ENCODE measurements at regions of chr9 and their contacts with region 1.

Region 1: DNA sequence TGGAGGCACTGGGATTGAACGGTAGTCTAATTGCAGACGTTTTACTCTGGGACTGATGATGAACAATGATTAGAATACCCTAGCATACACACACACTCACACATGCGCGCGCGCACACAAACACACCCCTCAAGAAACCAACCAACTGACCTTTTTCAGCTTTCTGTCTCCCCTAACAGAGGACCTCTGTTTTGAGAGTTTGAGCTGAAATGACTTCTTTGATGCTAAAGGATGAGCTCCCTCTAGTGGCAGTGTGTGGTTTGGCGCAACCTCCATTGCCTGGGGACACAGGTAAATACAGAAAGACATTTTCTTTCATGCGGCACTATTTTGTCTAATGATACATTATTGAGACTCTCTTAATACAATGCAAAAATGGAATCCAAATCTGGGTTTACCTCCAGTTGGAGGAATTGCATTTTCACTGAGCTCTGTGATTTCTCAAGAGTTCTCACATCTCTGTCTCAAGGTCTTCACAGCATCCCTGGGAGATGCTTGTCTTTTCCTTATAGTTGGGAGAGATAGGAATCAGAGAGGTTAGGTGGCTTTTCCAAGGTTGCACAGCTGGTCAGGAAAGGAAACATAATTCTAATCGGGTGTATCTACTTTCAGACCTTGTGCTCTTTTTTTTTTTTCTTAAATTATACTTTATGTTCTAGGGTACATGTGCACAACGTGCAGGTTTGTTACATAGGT is 187.5 kb downstream of the TMEM38B start:
- DNase-seq: peak; percentile 57 to 61
- H3K4me3 ChIP-seq: no peak overlapping the region
- H3K4me3 Mint-ChIP-seq: no peak overlapping the region
- H3K27ac Mint-ChIP-seq: no peak overlapping the region
- H3K4me1 ChIP-seq: no peaks in the 10 kb centered on the region
- H3K4me1 Mint-ChIP-seq: no peaks in the 10 kb centered on the region
- H3K27me3 ChIP-seq: no peaks in the 10 kb centered on the region
- H3K27me3 Mint-ChIP-seq: peaks cover 2% of the 10 kb centered on the region
- CTCF ChIP-seq: peak; percentile 45 to 71

Region 2: DNA sequence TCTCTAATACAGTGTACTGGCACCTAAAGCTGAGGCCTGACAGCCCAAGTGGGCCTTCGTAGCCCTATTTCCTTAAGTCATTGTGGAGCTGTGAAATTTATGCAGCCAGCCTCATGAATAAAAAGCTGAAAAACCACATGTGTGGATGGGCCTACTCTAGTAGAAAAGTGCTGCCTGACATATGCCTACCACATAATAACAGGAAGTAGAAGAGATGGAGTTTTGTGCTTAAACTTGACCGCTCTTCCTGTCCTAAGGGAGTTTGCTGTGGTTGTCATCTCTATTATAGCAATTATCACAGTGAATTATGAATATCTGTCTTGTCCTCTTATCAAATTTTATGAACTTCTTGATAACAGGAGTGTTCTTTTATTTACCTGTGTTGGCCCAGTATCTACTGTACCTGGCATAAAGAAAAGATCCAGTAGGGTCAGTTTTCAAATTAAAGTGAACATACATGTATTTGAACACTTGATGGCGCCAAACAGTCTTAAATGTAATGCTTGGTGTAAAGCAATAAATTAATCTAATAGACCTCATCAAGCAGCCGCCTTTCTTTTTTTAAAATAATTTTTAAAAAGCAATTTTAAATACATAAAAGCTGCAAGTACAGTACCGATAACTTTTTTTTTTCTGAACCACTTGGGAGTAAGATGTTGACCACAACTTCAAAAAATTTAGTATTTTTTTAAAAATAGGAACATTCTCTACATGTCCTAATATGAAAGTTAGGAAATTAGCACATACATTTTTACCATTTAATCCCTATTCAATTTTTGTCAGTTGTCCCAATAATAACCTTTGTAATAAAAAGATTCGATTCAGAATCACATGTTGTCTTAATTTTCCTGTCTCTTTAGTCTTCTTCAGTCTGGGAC is 272.8 kb before region 1 on chr9:
- CTCF ChIA-PET with region 1: no interaction called
- POLR2A ChIA-PET with region 1: no interaction called
- intact Hi-C with region 1: loop called (anchors 5 kb)
- DNase-seq: peak in 1 of 2 experiments; percentile 40
- H3K4me3 ChIP-seq: no peak overlapping the region
- H3K4me3 Mint-ChIP-seq: no peak overlapping the region
- H3K27ac Mint-ChIP-seq: no peak overlapping the region
- H3K4me1 ChIP-seq: no peaks in the 10 kb centered on the region
- H3K4me1 Mint-ChIP-seq: no peaks in the 10 kb centered on the region
- H3K27me3 ChIP-seq: no peaks in the 10 kb centered on the region
- H3K27me3 Mint-ChIP-seq: no peaks in the 10 kb centered on the region
- CTCF ChIP-seq: peak; percentile 44 to 48

Region 3: DNA sequence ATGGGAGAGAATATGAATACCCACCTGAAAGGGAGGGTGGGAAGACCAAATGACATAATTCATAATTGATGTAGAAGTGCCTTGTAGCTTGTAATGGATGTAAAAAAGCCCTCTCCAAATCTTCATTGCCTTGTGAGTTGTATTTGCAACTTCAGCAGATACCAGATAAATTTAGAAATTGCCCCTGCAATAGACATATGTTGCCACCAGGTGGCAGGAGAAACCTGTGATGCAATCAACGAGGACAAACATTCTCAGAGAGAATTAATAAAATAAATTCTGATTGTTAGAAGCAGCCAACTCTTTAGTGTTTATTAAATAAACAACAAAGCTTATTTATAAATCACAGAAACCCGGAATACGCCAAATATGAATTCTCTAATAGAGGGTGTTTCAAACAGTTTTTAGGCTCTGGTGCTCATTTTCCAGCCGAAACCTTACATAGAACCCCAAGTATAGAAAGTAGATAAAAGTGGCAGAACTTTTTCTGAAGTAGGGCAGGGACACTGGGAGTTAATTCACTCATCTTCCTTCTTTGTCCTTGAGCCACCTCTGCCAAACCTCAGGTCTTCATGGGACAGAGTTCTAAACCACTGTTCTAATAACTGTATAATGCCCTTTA is 39.7 kb before region 1 on chr9:
- CTCF ChIA-PET with region 1: interaction called, 12 read pairs
- POLR2A ChIA-PET with region 1: no interaction called
- intact Hi-C with region 1: loop called (anchors 1 kb)
- DNase-seq: peak in 1 of 2 experiments; percentile 10
- H3K4me3 ChIP-seq: no peak overlapping the region
- H3K4me3 Mint-ChIP-seq: no peak overlapping the region
- H3K27ac Mint-ChIP-seq: no peak overlapping the region
- H3K4me1 ChIP-seq: no peaks in the 10 kb centered on the region
- H3K4me1 Mint-ChIP-seq: no peaks in the 10 kb centered on the region
- H3K27me3 ChIP-seq: no peaks in the 10 kb centered on the region
- H3K27me3 Mint-ChIP-seq: no peaks in the 10 kb centered on the region
- CTCF ChIP-seq: peak; percentile 43 to 60